ENCODE measurements at regions of chr9 and their contacts with region 1.

Region 1: GRCh38 chr9:68552700-68553476 is 12.2 kb upstream of the TMEM252 start:
- DNase-seq: no peak

Region 2: GRCh38 chr9:68520356-68520755 is 32.5 kb before region 1 on chr9:
- intact Hi-C with region 1: loop called (anchors 2 kb)
- DNase-seq: no peak